IMR-90 (cell line): ENCODE measurements at regions of chrX and their contacts with region 1.

Region 1: GRCh38 chrX:42746606-42747005 is 31.4 kb downstream of the PPP1R2C start:
- DNase-seq: peak; percentile 38
- ATAC-seq: peak; percentile 24; the same call in 1 of the 2 replicates
- H3K4me3 ChIP-seq: no peak overlapping the region
- H3K27ac ChIP-seq: no peak overlapping the region
- H3K4me1 ChIP-seq: peaks cover 3% of the 10 kb centered on the region
- H3K27me3 ChIP-seq: no peaks in the 10 kb centered on the region
- CTCF ChIP-seq: no peak
- POLR2A ChIP-seq: no peak
- RAD21 ChIP-seq: no peak

Region 2: GRCh38 chrX:41781502-41781901 is 965.1 kb before region 1 on chrX:
- CTCF ChIA-PET with region 1: no interaction called
- POLR2A ChIA-PET with region 1: no interaction called
- dilution Hi-C with region 1: no loop called
- in situ Hi-C with region 1: loop called (anchors 25 kb)
- intact Hi-C with region 1: no loop called
- DNase-seq: peak; percentile 56
- ATAC-seq: peak; percentile 56
- H3K4me3 ChIP-seq: no peak overlapping the region
- H3K27ac ChIP-seq: no peak overlapping the region
- H3K4me1 ChIP-seq: peaks cover 3% of the 10 kb centered on the region
- H3K27me3 ChIP-seq: no peaks in the 10 kb centered on the region
- CTCF ChIP-seq: peak; percentile 69
- POLR2A ChIP-seq: 0 out of 2 replicates have a peak, but pooled peaks have one; percentile 23
- RAD21 ChIP-seq: peak; percentile 79

Region 3: GRCh38 chrX:42732506-42732905 is 14.1 kb before region 1 on chrX:
- CTCF ChIA-PET with region 1: no interaction called
- POLR2A ChIA-PET with region 1: no interaction called
- dilution Hi-C with region 1: no loop called
- in situ Hi-C with region 1: no loop called
- intact Hi-C with region 1: no loop called
- DNase-seq: no peak
- ATAC-seq: no peak
- H3K4me3 ChIP-seq: no peak overlapping the region
- H3K27ac ChIP-seq: no peak overlapping the region
- H3K4me1 ChIP-seq: no peaks in the 10 kb centered on the region
- H3K27me3 ChIP-seq: no peaks in the 10 kb centered on the region
- CTCF ChIP-seq: no peak
- POLR2A ChIP-seq: no peak
- RAD21 ChIP-seq: no peak

Region 4: GRCh38 chrX:42797646-42798269 is 51.2 kb after region 1 on chrX:
- CTCF ChIA-PET with region 1: no interaction called
- POLR2A ChIA-PET with region 1: no interaction called
- dilution Hi-C with region 1: no loop called
- in situ Hi-C with region 1: no loop called
- intact Hi-C with region 1: no loop called
- DNase-seq: no peak
- ATAC-seq: no peak
- H3K4me3 ChIP-seq: no peak overlapping the region
- H3K27ac ChIP-seq: no peak overlapping the region
- H3K4me1 ChIP-seq: no peaks in the 10 kb centered on the region
- H3K27me3 ChIP-seq: no peaks in the 10 kb centered on the region; the same call in 1 of the 2 replicates
- CTCF ChIP-seq: no peak
- POLR2A ChIP-seq: no peak
- RAD21 ChIP-seq: no peak